Panc1 (cell line): ENCODE measurements at regions of chr14 and their contacts with region 1.

Region 1: DNA sequence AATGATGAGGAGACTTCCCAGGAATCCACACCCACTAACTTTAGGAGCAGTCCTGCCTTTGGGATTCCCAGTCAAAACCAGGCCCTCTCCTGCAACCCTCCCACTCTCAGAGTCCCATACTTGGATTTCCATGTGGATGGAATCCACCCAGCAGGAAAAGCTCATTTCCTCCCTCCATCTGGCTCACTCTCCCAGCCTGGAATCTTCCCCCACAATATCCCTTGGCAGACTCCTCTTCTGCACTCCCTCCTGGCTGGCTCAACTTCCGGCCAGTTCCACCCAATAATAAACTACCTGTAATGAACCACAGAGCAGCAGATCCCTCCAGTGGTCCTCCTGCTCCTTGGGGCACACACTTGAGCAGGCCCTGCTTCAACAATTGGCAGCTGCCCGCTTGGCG is 102.8 kb upstream of the EGLN3 start:
- DNase-seq: no peak
- ATAC-seq: no peak
- H3K4me3 ChIP-seq: no peak overlapping the region
- H3K27ac ChIP-seq: no peak overlapping the region
- H3K4me1 ChIP-seq: no peaks in the 10 kb centered on the region
- H3K27me3 ChIP-seq: no peaks in the 10 kb centered on the region
- CTCF ChIP-seq: no peak

Region 2: GRCh38 chr14:34270361-34270760 is 216.7 kb after region 1 on chr14:
- CTCF ChIA-PET with region 1: no interaction called
- POLR2A ChIA-PET with region 1: interaction called, 11 read pairs
- in situ Hi-C with region 1: no loop called
- intact Hi-C with region 1: no loop called
- DNase-seq: no peak
- ATAC-seq: no peak
- H3K4me3 ChIP-seq: no peak overlapping the region
- H3K27ac ChIP-seq: no peak overlapping the region
- H3K4me1 ChIP-seq: no peaks in the 10 kb centered on the region
- H3K27me3 ChIP-seq: no peaks in the 10 kb centered on the region; the same call in 1 of the 2 replicates
- CTCF ChIP-seq: no peak